Activated CD4-positive, alpha-beta memory T cell treated with anti-CD3 and anti-CD28 coated beads for 36 hours (primary cell): ENCODE measurements at regions of chr1 and their contacts with region 1.

Region 1: DNA sequence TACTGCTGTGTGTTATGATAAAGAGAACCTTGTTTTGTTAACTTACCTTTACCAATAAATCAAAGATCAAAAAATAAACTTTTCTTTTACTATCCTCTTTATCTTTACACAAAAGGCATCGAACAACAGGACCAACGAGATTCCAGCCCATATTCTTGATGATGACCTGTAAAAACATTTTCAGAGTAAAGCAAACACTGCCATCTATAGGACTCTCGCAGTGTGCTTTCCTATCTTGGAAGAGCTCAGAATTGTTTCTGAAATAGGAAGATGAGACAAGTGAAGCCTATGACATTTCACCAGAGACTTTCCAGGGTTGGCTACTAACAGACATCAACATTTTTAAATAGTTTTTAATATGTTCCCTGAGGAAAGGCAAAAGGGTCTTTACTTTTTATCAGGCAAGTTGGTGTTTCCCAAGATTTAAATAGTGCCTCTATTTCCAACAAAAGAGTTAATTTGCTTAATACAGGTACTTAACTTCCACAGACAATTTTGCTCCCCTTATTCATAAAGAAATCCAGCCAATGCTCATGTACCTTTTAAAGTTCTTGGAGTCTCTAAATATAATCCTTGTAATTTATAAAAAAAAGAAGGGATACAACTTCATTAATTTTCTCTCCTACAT is 7.3 kb downstream of the GLMN start:
- DNase-seq: no peak
- H3K4me3 Mint-ChIP-seq: no peak overlapping the region
- H3K27ac Mint-ChIP-seq: no peak overlapping the region
- H3K4me1 Mint-ChIP-seq: peaks cover 7% of the 10 kb centered on the region
- H3K27me3 Mint-ChIP-seq: no peaks in the 10 kb centered on the region

Region 2: GRCh38 chr1:91997607-91998195 is 293.8 kb before region 1 on chr1:
- CTCF ChIA-PET with region 1: interaction called, 36 read pairs
- POLR2A ChIA-PET with region 1: no interaction called
- intact Hi-C with region 1: loop called (anchors 1 kb)
- DNase-seq: peak; percentile 31
- H3K4me3 Mint-ChIP-seq: no peak overlapping the region
- H3K27ac Mint-ChIP-seq: no peak overlapping the region
- H3K4me1 Mint-ChIP-seq: no peaks in the 10 kb centered on the region
- H3K27me3 Mint-ChIP-seq: no peaks in the 10 kb centered on the region